Activated B cell treated with CpG ODN at 0.5 μM for 24 hours (primary cell): ENCODE measurements at regions of chr2 and their contacts with region 1.

Region 1: GRCh38 chr2:30310955-30311354 is 79.6 kb downstream of the LBH start:
- DNase-seq: no peak
- ATAC-seq: peak; percentile 64
- H3K4me3 Mint-ChIP-seq: peak overlapping the region; percentile 38
- H3K27ac Mint-ChIP-seq: peak overlapping the region; percentile 82
- H3K4me1 Mint-ChIP-seq: peaks cover 53% of the 10 kb centered on the region
- H3K27me3 Mint-ChIP-seq: no peaks in the 10 kb centered on the region
- CTCF ChIP-seq: no peak

Region 2: GRCh38 chr2:30346471-30347169 is 35.7 kb after region 1 on chr2:
- CTCF ChIA-PET with region 1: no interaction called
- POLR2A ChIA-PET with region 1: no interaction called
- intact Hi-C with region 1: no loop called
- DNase-seq: no peak
- ATAC-seq: no peak
- H3K4me3 Mint-ChIP-seq: no peak overlapping the region
- H3K27ac Mint-ChIP-seq: no peak overlapping the region
- H3K4me1 Mint-ChIP-seq: peaks cover 10% of the 10 kb centered on the region
- H3K27me3 Mint-ChIP-seq: no peaks in the 10 kb centered on the region
- CTCF ChIP-seq: no peak

Region 3: GRCh38 chr2:30421604-30422443 is 110.9 kb after region 1 on chr2:
- CTCF ChIA-PET with region 1: no interaction called
- POLR2A ChIA-PET with region 1: interaction called, 11 read pairs
- intact Hi-C with region 1: no loop called
- DNase-seq: no peak
- ATAC-seq: peak; percentile 60
- H3K4me3 Mint-ChIP-seq: peak overlapping the region; percentile 39
- H3K27ac Mint-ChIP-seq: peak overlapping the region; percentile 82
- H3K4me1 Mint-ChIP-seq: peaks cover 42% of the 10 kb centered on the region
- H3K27me3 Mint-ChIP-seq: no peaks in the 10 kb centered on the region
- CTCF ChIP-seq: no peak